Mammary epithelial cell (primary cell): ENCODE measurements at regions of chr17 and their contacts with region 1.

Region 1: DNA sequence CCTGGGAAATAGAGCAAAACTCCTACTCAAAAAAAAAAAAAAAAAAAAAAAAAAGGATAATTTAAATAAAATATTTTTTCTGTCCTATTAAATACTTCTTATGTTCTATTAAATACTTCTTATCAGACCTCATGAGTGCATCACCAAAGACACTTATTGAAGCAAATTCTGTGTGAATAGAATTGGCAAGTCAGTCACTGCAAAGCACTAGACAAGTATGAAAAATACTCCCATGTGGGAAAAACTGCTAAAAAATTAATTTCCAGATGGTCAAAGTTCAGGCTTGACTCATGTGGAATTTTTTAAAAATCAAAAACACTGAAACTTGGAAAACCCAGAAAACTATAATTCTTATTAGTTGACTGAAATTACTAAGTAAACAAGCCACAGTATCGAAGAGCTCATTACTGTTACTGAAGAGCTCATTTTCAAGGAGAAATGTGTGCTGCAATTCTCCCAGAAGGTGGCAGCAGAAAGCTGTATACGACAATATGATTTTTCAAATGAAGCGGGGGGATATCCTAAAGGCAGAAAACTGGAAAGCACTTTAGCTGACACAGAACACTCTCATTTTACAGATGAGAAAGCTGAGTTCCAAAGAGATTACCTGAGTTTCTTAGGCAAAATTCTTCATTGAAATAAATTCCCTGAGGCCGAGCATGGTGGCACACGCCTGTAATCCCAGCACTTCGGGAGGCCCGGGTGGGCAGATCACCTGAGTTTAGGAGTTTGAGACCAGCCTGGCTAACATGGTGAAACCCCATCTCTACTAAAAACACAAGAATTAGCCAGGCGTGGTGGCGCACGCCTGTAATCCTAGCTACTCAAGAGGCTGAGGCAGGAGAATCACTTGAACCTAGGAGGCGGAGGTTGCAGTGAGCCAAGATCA is 15.9 kb upstream of the FBXO47 start:
- DNase-seq: peak; percentile 38
- H3K4me3 ChIP-seq: no peak overlapping the region
- H3K27ac ChIP-seq: no peak overlapping the region
- H3K4me1 ChIP-seq: no peaks in the 10 kb centered on the region
- H3K27me3 ChIP-seq: no peaks in the 10 kb centered on the region
- CTCF ChIP-seq: peak; percentile 77 to 85

Region 2: GRCh38 chr17:38958756-38959155 is 24.3 kb before region 1 on chr17:
- CTCF ChIA-PET with region 1: no interaction called
- dilution Hi-C with region 1: no loop called
- in situ Hi-C with region 1: no loop called
- intact Hi-C with region 1: no loop called
- DNase-seq: no peak
- H3K4me3 ChIP-seq: no peak overlapping the region
- H3K27ac ChIP-seq: no peak overlapping the region
- H3K4me1 ChIP-seq: no peaks in the 10 kb centered on the region
- H3K27me3 ChIP-seq: no peaks in the 10 kb centered on the region
- CTCF ChIP-seq: no peak

Region 3: GRCh38 chr17:39026980-39027451 is 43.9 kb after region 1 on chr17:
- CTCF ChIA-PET with region 1: no interaction called
- dilution Hi-C with region 1: loop called (anchors 5 kb)
- in situ Hi-C with region 1: no loop called
- intact Hi-C with region 1: no loop called
- DNase-seq: peak; percentile 16
- H3K4me3 ChIP-seq: peak overlapping the region; percentile 32 to 38 (median 38)
- H3K27ac ChIP-seq: no peak overlapping the region
- H3K4me1 ChIP-seq: peaks cover 9% of the 10 kb centered on the region
- H3K27me3 ChIP-seq: peaks cover 5% of the 10 kb centered on the region
- CTCF ChIP-seq: no peak

Region 4: GRCh38 chr17:39062846-39063680 is 80.0 kb after region 1 on chr17:
- CTCF ChIA-PET with region 1: interaction called, 12 read pairs
- dilution Hi-C with region 1: no loop called
- in situ Hi-C with region 1: no loop called
- intact Hi-C with region 1: loop called (anchors 2 kb)
- DNase-seq: peak; percentile 66
- H3K4me3 ChIP-seq: no peak overlapping the region
- H3K27ac ChIP-seq: no peak overlapping the region
- H3K4me1 ChIP-seq: peaks cover 25% of the 10 kb centered on the region
- H3K27me3 ChIP-seq: no peaks in the 10 kb centered on the region
- CTCF ChIP-seq: no peak

Region 5: DNA sequence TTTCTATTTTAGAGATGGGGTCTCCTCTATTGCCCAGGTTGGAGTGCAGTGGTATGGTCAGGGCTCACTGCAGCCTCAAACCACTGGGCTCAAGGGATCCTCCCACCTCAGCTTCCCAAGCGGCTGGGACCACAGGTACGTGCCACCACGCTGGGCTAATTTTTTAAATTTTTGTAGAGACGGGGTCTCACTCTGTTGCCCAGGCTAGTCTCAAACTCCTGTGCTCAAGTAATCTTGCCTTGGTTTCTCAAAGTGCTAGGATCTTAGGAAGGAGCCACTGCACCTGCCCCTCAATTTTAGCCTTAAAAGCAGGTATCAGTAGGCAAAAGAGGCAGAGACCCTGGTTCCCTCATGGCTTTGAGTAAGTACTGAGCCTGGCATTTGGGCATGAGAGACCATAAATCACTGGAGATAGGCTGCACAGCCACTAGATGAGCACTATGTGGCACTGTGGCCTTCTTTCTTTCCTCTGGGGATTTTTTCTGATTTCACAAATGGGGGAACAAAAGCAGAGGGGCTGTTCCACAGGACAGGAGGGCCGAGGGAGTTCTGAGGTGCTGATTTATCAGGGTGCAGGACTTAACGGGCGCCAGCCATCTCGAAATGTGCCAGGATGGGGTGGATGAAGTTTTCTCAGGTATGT is 86.1 kb after region 1 on chr17:
- CTCF ChIA-PET with region 1: no interaction called
- dilution Hi-C with region 1: no loop called
- in situ Hi-C with region 1: no loop called
- intact Hi-C with region 1: loop called (anchors 2 kb)
- DNase-seq: peak; percentile 32
- H3K4me3 ChIP-seq: no peak overlapping the region
- H3K27ac ChIP-seq: no peak overlapping the region
- H3K4me1 ChIP-seq: peaks cover 19% of the 10 kb centered on the region
- H3K27me3 ChIP-seq: no peaks in the 10 kb centered on the region
- CTCF ChIP-seq: peak; percentile 70 to 75

Region 6: DNA sequence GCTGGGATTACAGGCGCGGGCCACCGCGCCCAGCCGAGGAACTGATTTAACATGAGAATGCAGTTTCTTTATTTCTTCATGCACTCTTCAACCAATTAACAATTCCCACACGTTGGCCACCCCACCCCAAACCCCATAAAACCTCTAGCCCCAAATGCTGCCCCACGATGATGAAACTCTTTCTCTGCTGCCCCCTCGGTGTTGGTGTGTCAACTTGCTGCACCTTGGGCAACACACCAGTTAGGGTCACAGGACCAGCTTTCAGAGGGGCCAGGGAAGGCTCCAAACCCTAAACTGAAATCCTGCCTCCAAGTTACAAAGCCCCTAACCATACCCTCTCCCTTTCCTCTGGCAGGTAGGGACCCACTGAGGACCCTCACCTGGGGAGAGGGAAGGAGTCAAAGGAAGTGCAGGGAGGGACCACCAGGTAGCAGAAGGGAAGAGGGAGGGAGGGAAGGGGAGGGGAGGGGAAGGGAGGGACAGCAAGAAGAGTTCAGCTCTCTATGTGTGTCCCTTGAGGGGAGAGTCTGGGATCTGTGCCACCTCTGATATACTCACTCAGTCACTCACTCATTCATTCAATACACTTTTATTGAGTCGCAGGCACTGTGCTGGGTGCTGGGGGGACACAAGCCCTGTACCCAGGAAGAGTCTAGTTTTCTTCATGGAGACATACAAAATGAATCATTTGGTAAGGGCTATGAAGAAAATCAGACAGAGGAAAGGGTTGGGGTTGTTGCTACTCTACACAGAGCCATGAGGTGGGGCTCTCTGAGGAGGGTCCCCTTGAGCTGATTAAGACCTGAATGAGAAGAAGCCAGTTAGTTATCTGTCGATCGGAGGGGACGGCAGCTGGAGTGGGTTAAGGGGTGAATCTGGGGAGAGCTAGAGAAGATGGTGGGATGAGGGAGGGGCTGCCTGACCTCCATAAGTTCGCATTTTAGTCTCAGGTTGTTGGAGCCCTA is 164.4 kb after region 1 on chr17:
- CTCF ChIA-PET with region 1: interaction called, 95 read pairs
- dilution Hi-C with region 1: no loop called
- in situ Hi-C with region 1: loop called (anchors 5 to 25 kb)
- intact Hi-C with region 1: no loop called
- DNase-seq: no peak
- H3K4me3 ChIP-seq: no peak overlapping the region
- H3K27ac ChIP-seq: no peak overlapping the region
- H3K4me1 ChIP-seq: peaks cover 24% of the 10 kb centered on the region
- H3K27me3 ChIP-seq: peaks cover 4% of the 10 kb centered on the region
- CTCF ChIP-seq: no peak

Region 7: DNA sequence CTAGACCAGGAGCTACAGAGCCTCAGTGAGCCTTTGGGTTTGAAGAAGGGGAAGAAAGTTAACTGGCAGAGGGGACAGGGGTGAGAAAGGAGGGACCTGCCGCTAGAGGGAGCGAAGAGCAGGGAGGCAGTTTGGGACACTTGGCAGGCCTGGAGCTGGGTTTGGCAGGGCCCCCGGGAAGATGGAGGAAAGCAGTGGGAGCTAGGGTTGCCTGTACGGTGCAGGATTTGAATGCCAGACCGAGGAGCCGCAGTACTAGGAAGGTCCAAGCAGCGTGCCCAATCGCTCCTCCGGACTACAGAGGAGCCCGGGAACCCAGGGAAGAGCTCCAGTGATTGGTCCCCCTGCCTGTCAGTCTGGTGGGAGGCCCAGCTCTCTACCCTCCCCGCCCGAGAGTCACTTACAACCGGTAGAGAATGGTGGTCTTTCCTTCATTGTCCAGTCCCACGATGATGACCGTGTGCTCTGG is 181.6 kb after region 1 on chr17:
- CTCF ChIA-PET with region 1: interaction called, 24 read pairs
- dilution Hi-C with region 1: no loop called
- in situ Hi-C with region 1: loop called in 1 of 2 experiments (anchors 25 kb)
- intact Hi-C with region 1: no loop called
- DNase-seq: peak; percentile 71
- H3K4me3 ChIP-seq: no peak overlapping the region
- H3K27ac ChIP-seq: no peak overlapping the region
- H3K4me1 ChIP-seq: peaks cover 10% of the 10 kb centered on the region
- H3K27me3 ChIP-seq: no peaks in the 10 kb centered on the region
- CTCF ChIP-seq: peak; percentile 78 to 89

Region 8: DNA sequence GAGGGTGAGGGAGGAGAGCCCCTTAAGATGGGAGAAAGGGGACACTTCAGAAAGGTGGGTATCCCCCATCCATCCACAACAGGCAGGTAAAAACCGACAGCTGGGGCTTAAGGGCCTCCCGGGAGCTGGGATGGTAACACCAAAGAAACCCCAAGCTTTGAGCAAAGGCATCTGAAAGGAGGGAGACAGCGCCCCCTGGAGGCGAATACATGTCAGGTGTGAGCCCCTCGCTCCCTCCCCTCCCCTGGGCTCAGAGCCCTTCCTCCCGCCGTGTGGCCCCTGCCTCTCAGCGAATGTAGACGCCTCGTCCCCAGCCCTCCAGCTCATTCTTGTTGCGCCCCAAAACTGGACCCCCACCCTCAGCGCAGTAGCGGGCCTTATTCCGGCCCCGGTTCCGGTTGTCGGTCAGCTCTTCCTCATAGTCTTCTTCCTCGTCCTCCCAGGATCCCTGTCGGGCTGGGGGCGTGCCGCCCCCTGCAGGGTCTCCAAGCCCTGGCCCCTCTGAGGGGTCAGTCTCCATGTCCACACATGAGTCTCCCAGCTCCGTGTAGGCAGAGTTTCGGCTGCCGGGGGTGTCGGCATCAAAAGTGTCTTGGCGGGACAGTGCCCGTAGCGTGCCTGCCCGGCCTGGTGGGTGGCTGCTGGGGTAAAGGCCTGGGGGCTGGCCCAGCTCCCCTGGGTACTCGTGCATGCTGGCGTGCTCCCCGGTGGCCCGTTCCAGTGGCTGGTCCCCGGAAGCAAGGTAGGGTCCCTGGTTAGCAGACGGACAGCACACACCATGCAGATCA is 192.0 kb after region 1 on chr17:
- CTCF ChIA-PET with region 1: interaction called, 24 read pairs
- dilution Hi-C with region 1: no loop called
- in situ Hi-C with region 1: loop called in 1 of 2 experiments (anchors 25 kb)
- intact Hi-C with region 1: loop called (anchors 1 kb)
- DNase-seq: no peak
- H3K4me3 ChIP-seq: no peak overlapping the region
- H3K27ac ChIP-seq: no peak overlapping the region
- H3K4me1 ChIP-seq: peaks cover 10% of the 10 kb centered on the region
- H3K27me3 ChIP-seq: no peaks in the 10 kb centered on the region
- CTCF ChIP-seq: peak; percentile 67 to 76